CD8-positive, alpha-beta T cell (primary cell): ENCODE measurements at regions of chr5 and their contacts with region 1.

Region 1: GRCh38 chr5:136020383-136021015 is 8.3 kb upstream of the TGFBI start:
- DNase-seq: peak in 2 of 9 experiments; percentile 11 to 35
- ATAC-seq: no peak
- H3K4me3 ChIP-seq: no peak overlapping the region
- H3K4me3 Mint-ChIP-seq: no peak overlapping the region
- H3K27ac ChIP-seq: no peak overlapping the region
- H3K27ac Mint-ChIP-seq: no peak overlapping the region
- H3K4me1 ChIP-seq: no peaks in the 10 kb centered on the region
- H3K4me1 Mint-ChIP-seq: no peaks in the 10 kb centered on the region
- H3K27me3 ChIP-seq: no peaks in the 10 kb centered on the region
- H3K27me3 Mint-ChIP-seq: peaks cover 3% of the 10 kb centered on the region
- CTCF ChIP-seq: no peak

Region 2: GRCh38 chr5:135964670-135965320 is 55.7 kb before region 1 on chr5:
- CTCF ChIA-PET with region 1: no interaction called
- POLR2A ChIA-PET with region 1: no interaction called
- intact Hi-C with region 1: loop called in 1 of 2 experiments (anchors 2 kb)
- DNase-seq: no peak
- ATAC-seq: no peak
- H3K4me3 ChIP-seq: no peak overlapping the region
- H3K4me3 Mint-ChIP-seq: no peak overlapping the region
- H3K27ac ChIP-seq: no peak overlapping the region
- H3K27ac Mint-ChIP-seq: no peak overlapping the region
- H3K4me1 ChIP-seq: no peaks in the 10 kb centered on the region
- H3K4me1 Mint-ChIP-seq: no peaks in the 10 kb centered on the region
- H3K27me3 ChIP-seq: no peaks in the 10 kb centered on the region
- H3K27me3 Mint-ChIP-seq: peaks cover 8% of the 10 kb centered on the region
- CTCF ChIP-seq: no peak

Region 3: GRCh38 chr5:136047858-136048257 is 27.4 kb after region 1 on chr5:
- CTCF ChIA-PET with region 1: no interaction called
- POLR2A ChIA-PET with region 1: no interaction called
- intact Hi-C with region 1: no loop called
- DNase-seq: no peak
- ATAC-seq: no peak
- H3K4me3 ChIP-seq: no peak overlapping the region
- H3K4me3 Mint-ChIP-seq: no peak overlapping the region
- H3K27ac ChIP-seq: no peak overlapping the region
- H3K27ac Mint-ChIP-seq: no peak overlapping the region
- H3K4me1 ChIP-seq: peaks cover under 1% of the 10 kb centered on the region
- H3K4me1 Mint-ChIP-seq: peaks cover under 1% of the 10 kb centered on the region
- H3K27me3 ChIP-seq: no peaks in the 10 kb centered on the region
- H3K27me3 Mint-ChIP-seq: peaks cover 2% of the 10 kb centered on the region
- CTCF ChIP-seq: no peak

Region 4: DNA sequence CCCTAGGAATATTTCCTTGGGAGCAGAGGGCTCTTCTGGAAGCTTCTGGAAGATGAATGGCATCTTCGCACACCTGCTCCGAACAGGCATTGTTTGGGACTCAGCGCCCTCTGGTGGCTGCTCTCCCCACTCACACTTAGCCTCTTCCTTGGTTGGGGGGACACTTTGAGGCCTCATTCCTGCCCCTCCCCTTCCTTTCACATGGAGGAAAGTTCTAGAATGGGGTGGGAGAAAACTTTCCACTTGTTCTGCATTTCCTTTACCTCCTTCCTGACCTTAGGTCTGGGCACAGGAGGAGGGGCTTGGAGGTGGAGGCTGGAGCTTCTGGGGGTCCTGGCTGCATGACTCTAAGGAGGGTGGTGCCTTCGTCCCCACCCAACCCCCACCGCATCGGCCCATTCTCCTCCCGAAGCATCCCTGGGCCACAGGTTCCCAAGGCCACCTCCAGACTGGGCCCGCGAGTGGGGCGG is 191.8 kb after region 1 on chr5:
- CTCF ChIA-PET with region 1: no interaction called
- POLR2A ChIA-PET with region 1: no interaction called
- intact Hi-C with region 1: no loop called
- DNase-seq: peak in 8 of 9 experiments; percentile 11 to 65 (median 48)
- ATAC-seq: no peak
- H3K4me3 ChIP-seq: no peak overlapping the region
- H3K4me3 Mint-ChIP-seq: no peak overlapping the region
- H3K27ac ChIP-seq: no peak overlapping the region
- H3K27ac Mint-ChIP-seq: no peak overlapping the region
- H3K4me1 ChIP-seq: no peaks in the 10 kb centered on the region
- H3K4me1 Mint-ChIP-seq: no peaks in the 10 kb centered on the region
- H3K27me3 ChIP-seq: no peaks in the 10 kb centered on the region
- H3K27me3 Mint-ChIP-seq: peaks cover 13% of the 10 kb centered on the region
- CTCF ChIP-seq: peak; percentile 66

Region 5: DNA sequence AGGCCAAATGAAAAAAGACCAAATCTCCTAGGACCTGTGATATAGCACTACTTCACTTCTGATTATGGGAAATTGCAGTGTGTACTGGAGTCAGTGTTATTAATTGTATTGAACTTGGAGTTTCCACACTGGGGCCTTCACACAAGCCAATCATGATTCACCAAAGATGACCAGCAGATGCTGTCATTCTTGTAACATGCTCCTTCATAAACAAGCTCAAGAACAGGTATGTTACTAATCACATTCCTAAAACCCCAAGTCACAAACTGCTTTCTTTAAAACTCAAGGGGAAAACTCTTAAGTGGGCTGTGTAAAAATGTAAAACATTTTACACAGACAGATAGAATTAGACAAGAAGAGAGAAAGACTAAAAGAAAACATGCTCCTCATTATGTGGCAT is 1709.8 kb after region 1 on chr5:
- CTCF ChIA-PET with region 1: no interaction called
- POLR2A ChIA-PET with region 1: no interaction called
- intact Hi-C with region 1: loop called in 1 of 2 experiments (anchors 10 kb)
- DNase-seq: no peak
- ATAC-seq: no peak
- H3K4me3 ChIP-seq: no peak overlapping the region
- H3K4me3 Mint-ChIP-seq: no peak overlapping the region
- H3K27ac ChIP-seq: no peak overlapping the region
- H3K27ac Mint-ChIP-seq: no peak overlapping the region
- H3K4me1 ChIP-seq: peaks cover 23% of the 10 kb centered on the region
- H3K4me1 Mint-ChIP-seq: peaks cover 20% of the 10 kb centered on the region
- H3K27me3 ChIP-seq: no peaks in the 10 kb centered on the region
- H3K27me3 Mint-ChIP-seq: no peaks in the 10 kb centered on the region
- CTCF ChIP-seq: no peak